WTC11 (cell line): ENCODE measurements at regions of chr2 and their contacts with region 1.

Region 1: GRCh38 chr2:237165405-237166276 is 80.0 kb downstream of the COPS8 start:
- DNase-seq: peak; percentile 41
- ATAC-seq: peak; percentile 89
- H3K4me3 Mint-ChIP-seq: no peak overlapping the region
- H3K27ac Mint-ChIP-seq: no peak overlapping the region
- H3K4me1 Mint-ChIP-seq: peaks cover 10% of the 10 kb centered on the region
- H3K27me3 Mint-ChIP-seq: no peaks in the 10 kb centered on the region; the same call in none of the 2 replicates
- CTCF ChIP-seq: peak; percentile 39

Region 2: DNA sequence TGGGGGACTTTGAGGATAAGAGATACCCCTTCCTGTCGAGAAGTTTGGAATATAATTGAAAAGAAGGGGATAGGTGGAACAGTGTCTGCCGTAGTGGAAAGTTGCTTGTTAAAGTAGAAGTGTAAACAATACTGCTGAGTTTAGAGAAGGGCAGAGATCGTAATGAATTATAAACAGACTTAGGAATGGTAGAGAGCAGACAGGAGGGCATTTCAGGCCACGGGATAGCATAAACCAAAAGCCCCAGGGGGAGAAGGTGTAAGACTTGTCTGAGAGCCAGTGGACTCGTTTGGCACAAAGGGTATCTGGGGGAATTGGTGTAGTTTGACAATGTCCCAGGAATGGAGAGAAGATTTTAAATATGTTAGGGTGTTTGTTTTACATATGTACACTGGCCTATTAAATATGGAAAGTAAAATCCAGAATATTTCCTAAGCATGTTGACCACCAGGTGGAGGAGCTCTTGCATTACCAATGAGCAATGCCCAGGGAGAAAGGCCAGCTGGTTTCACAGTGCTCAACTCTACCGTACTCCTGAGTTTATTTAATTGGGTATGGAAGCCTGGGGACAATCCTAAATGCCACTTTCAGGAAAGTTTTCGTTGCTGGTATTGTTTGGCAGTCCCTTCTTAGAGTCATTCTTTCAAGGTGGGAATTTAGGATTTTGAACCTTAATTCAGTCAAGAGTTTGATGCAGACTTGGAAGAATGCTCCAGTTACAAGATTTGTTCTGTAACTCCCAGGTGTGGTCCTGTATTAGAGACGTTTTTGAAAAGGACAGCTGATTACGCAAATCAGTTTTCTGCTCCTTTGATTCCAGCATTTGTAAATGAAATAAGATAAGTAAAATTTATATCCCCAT is 72.5 kb before region 1 on chr2:
- CTCF ChIA-PET with region 1: no interaction called
- POLR2A ChIA-PET with region 1: no interaction called
- DNase-seq: no peak
- ATAC-seq: no peak
- H3K4me3 Mint-ChIP-seq: no peak overlapping the region
- H3K27ac Mint-ChIP-seq: no peak overlapping the region
- H3K4me1 Mint-ChIP-seq: no peaks in the 10 kb centered on the region
- H3K27me3 Mint-ChIP-seq: no peaks in the 10 kb centered on the region
- CTCF ChIP-seq: no peak

Region 3: GRCh38 chr2:237154082-237154638 is 11.5 kb before region 1 on chr2:
- CTCF ChIA-PET with region 1: interaction called, 11 read pairs
- POLR2A ChIA-PET with region 1: no interaction called
- DNase-seq: peak; percentile 64
- ATAC-seq: peak; percentile 38; the same call in 1 of the 2 replicates
- H3K4me3 Mint-ChIP-seq: no peak overlapping the region
- H3K27ac Mint-ChIP-seq: no peak overlapping the region
- H3K4me1 Mint-ChIP-seq: peaks cover 18% of the 10 kb centered on the region
- H3K27me3 Mint-ChIP-seq: no peaks in the 10 kb centered on the region; the same call in 1 of the 2 replicates
- CTCF ChIP-seq: peak; percentile 52

Region 4: DNA sequence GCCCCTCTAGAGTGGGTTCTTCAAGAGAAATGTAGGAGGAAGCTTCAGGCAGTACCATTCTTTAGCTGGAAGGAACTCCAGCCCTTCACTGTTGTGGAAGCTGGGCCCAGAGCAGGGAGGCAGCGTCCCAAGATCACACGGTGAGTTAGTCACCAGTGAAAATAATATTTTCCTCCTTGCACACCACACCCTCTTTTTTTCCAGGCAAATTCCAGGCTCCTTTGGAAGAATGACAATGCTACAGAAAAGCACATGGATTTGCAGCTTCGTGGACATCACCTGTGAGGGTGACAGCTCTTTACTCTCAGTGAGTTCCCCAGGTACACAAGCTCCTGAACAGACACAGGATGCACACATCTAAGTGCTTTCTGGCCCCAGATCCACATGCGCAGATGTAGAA is 91.2 kb after region 1 on chr2:
- CTCF ChIA-PET with region 1: interaction called, 16 read pairs
- POLR2A ChIA-PET with region 1: no interaction called
- DNase-seq: no peak
- ATAC-seq: no peak
- H3K4me3 Mint-ChIP-seq: no peak overlapping the region
- H3K27ac Mint-ChIP-seq: 0 out of 2 replicates have a peak overlapping the region, but pooled peaks have one; percentile 12
- H3K4me1 Mint-ChIP-seq: peaks cover 10% of the 10 kb centered on the region
- H3K27me3 Mint-ChIP-seq: no peaks in the 10 kb centered on the region
- CTCF ChIP-seq: no peak

Region 5: GRCh38 chr2:237413777-237414661 is 248.4 kb after region 1 on chr2 and contains the start of gene COL6A3:
- CTCF ChIA-PET with region 1: interaction called, 55 read pairs
- POLR2A ChIA-PET with region 1: no interaction called
- DNase-seq: no peak
- ATAC-seq: peak; percentile 20; the same call in 1 of the 2 replicates
- H3K4me3 Mint-ChIP-seq: 0 out of 2 replicates have a peak within 1 kb of the TSS, but pooled peaks have one; percentile 1
- H3K27ac Mint-ChIP-seq: no peak within 1 kb of the TSS
- H3K4me1 Mint-ChIP-seq: peaks cover 32% of the 10 kb centered on the region
- H3K27me3 Mint-ChIP-seq: peaks cover 7% of the 10 kb centered on the region; the same call in 1 of the 2 replicates
- CTCF ChIP-seq: no peak
- total RNA-seq, gene COL6A3: 2.6 to 4.4 TPM (median 3.9 TPM) in 3 replicates

Region 6: GRCh38 chr2:237421542-237422116 is 256.0 kb after region 1 on chr2:
- CTCF ChIA-PET with region 1: interaction called, 26 read pairs
- POLR2A ChIA-PET with region 1: no interaction called
- DNase-seq: peak; percentile 90
- ATAC-seq: peak; percentile 98
- H3K4me3 Mint-ChIP-seq: peak overlapping the region; percentile 34; the same call in 1 of the 2 replicates
- H3K27ac Mint-ChIP-seq: no peak overlapping the region
- H3K4me1 Mint-ChIP-seq: peaks cover 9% of the 10 kb centered on the region
- H3K27me3 Mint-ChIP-seq: peaks cover 44% of the 10 kb centered on the region
- CTCF ChIP-seq: peak; percentile 69; the same call in 1 of the 2 replicates

Region 7: GRCh38 chr2:237451643-237452469 is 286.2 kb after region 1 on chr2:
- CTCF ChIA-PET with region 1: interaction called, 15 read pairs
- POLR2A ChIA-PET with region 1: no interaction called
- DNase-seq: peak; percentile 64
- ATAC-seq: peak; percentile 89
- H3K4me3 Mint-ChIP-seq: no peak overlapping the region
- H3K27ac Mint-ChIP-seq: no peak overlapping the region
- H3K4me1 Mint-ChIP-seq: peaks cover 21% of the 10 kb centered on the region
- H3K27me3 Mint-ChIP-seq: peaks cover 24% of the 10 kb centered on the region
- CTCF ChIP-seq: no peak

Region 8: DNA sequence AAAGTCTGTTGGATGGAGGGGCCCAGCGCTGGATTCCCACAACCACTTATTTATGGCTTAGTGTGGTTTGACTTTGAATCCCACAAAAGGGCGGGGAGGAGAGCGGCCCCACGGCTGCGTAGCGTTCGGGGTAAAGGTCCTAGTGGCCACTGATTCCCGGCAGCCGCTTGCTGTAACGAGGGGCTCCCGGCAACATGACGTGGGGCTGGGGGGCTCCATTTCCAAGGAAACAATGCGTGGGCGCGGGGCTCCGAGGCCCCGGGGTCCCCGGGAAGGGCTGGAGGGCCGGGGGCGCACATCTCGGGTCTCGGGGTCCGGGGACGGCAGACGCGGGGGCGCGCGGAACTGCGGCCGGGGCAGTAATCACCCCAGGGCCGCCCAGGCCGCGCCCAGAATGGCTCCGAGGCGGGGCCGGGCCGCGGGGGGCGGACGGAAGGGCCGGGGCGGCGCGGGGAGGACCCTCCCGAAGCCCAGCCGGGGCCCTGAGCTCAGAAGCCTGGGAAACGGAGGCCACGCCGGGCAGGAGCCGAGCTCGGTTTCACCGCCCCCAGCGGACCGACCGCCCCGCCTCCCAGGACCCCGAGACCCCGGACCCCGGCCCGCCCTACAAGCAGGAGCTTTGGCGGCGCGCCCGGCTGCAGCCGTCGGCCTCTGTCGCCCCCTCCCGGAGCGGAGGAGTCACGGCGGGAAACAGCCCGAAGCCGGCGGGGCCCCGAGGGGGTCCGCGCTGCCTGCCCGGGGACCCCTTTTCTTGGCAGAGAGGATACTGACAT is 309.5 kb after region 1 on chr2:
- CTCF ChIA-PET with region 1: interaction called, 10 read pairs
- POLR2A ChIA-PET with region 1: no interaction called
- DNase-seq: peak; percentile 88
- ATAC-seq: peak; percentile 81
- H3K4me3 Mint-ChIP-seq: peak overlapping the region; percentile 84
- H3K27ac Mint-ChIP-seq: peak overlapping the region; percentile 53; the same call in 1 of the 2 replicates
- H3K4me1 Mint-ChIP-seq: peaks cover 18% of the 10 kb centered on the region
- H3K27me3 Mint-ChIP-seq: peaks cover 47% of the 10 kb centered on the region
- CTCF ChIP-seq: peak; percentile 70